ENCODE measurements at regions of chr12 and their contacts with region 1.

Region 1: DNA sequence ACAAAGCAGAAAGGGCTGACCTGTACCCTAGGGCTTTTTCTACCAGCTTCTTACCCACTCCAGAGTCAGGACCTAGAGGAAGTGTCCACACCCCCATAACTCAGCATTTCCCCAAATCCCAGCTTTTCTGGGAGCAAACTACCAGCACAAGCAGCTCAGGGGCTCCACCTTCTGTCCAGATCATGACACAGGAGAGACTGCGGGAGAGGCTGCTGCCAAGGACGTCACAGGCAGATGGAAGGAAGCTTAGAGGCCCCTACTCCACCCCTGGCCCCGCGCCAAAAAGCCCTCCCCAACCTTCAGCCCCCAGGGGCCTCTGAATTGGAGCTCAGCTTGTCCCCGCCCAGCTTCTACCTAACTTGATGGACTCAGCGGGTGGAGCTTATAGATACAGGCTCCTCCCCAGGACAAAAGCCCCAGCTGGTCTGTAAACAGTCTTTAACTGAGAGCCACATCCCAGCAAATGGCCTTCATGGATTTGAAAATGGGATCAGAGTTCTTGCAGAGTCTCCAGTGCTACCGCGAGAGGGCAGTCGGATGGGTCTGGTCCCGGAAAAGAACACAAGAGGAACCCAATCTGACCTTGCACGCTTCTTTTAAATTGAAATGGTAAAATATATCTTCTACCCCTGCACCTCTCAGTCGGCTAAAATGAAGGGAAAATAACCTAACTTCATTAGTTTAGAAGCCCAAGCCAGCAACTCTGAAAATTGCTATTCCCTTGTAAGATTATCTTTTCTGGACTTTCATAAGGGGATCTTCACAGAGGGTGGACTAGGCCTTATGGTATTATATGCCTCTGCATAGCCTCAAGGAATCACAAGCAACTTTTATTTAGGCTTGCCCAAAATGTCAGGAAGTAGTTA is 6.8 kb upstream of the BAZ2A start:
- DNase-seq: peak; percentile 100
- H3K4me3 ChIP-seq: peak overlapping the region; percentile 77
- H3K27ac ChIP-seq: peak overlapping the region; percentile 78
- H3K4me1 ChIP-seq: peaks cover 35% of the 10 kb centered on the region
- H3K27me3 ChIP-seq: no peaks in the 10 kb centered on the region
- CTCF ChIP-seq: peak; percentile 82

Region 2: DNA sequence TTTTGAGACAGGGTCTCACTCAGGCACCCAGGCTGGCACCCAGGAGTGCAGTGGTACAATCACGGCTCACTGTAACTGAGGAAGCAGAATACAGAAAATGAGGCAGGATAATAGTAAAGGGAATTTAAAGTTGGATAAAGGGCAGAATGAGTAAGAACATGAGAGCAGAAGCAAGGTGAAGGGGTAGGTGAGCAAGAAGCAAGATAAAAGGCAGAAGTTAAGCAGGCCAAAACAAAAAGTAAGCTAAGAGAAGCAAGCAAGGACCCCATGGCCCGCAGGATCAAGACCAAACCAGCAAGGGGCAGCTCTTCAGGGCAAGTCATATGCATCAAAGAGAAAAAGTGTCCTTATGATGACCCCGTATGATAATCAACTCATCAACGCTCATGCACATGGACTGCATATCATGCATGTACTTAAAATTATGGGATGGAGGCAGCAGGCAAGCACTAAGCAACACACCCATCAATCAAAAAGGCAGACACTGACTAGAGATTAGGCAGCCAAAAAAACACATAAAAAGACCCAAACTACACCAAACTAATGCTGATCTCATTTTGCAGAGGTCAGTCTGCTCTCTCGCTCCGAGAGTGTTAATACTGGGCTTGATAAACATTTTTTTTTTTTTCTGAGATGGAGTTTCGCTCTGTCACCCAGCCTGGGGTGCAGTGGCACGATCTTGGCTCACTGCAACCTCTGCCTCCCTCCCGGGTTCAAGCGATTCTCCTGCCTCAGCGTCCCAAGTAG is 199.3 kb before region 1 on chr12:
- CTCF ChIA-PET with region 1: no interaction called
- POLR2A ChIA-PET with region 1: no interaction called
- intact Hi-C with region 1: no loop called
- DNase-seq: no peak
- H3K4me3 ChIP-seq: no peak overlapping the region
- H3K27ac ChIP-seq: no peak overlapping the region
- H3K4me1 ChIP-seq: no peaks in the 10 kb centered on the region
- H3K27me3 ChIP-seq: no peaks in the 10 kb centered on the region
- CTCF ChIP-seq: no peak

Region 3: GRCh38 chr12:56510786-56511185 is 126.1 kb before region 1 on chr12:
- CTCF ChIA-PET with region 1: interaction called, 20 read pairs
- POLR2A ChIA-PET with region 1: no interaction called
- intact Hi-C with region 1: loop called (anchors 5 kb)
- DNase-seq: no peak
- H3K4me3 ChIP-seq: no peak overlapping the region
- H3K27ac ChIP-seq: no peak overlapping the region
- H3K4me1 ChIP-seq: no peaks in the 10 kb centered on the region
- H3K27me3 ChIP-seq: no peaks in the 10 kb centered on the region
- CTCF ChIP-seq: no peak

Region 4: GRCh38 chr12:56601503-56601902 is 35.4 kb before region 1 on chr12:
- CTCF ChIA-PET with region 1: interaction called, 11 read pairs
- POLR2A ChIA-PET with region 1: no interaction called
- intact Hi-C with region 1: no loop called
- DNase-seq: peak; percentile 24
- H3K4me3 ChIP-seq: no peak overlapping the region
- H3K27ac ChIP-seq: no peak overlapping the region
- H3K4me1 ChIP-seq: no peaks in the 10 kb centered on the region
- H3K27me3 ChIP-seq: no peaks in the 10 kb centered on the region
- CTCF ChIP-seq: no peak

Measured in A673 (cell line).